Panc1 (cell line): ENCODE measurements at regions of chr5 and their contacts with region 1.

Region 1: DNA sequence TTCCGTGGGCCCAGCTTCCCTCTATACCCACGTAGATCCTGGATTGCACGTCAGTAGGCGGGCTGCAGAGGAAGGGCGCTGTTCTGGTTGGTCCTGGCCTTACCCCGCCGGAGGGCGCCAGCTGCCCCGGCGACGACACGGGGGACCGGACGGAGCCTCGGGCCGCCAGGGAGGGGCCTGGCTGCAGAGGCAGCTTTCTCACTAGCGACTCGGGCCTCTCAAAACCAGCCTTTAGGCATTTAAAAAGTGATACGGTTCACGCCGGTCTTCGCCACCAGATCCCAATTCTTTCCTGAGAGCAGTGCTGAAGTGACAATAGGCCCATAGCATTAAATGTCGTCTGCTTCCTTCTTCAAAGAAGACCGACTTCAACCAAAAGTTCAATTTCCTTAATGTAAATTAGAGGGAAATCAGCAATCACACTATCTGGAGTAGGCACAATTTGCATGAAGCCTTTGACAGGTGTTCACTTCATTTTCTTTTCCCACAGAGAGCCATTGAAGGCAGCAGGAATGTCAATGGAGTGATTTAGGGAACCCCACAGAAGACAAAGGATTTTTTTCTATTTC is 17.6 kb upstream of the UBE2D2 start:
- DNase-seq: no peak
- ATAC-seq: peak; percentile 90
- H3K4me3 ChIP-seq: peak overlapping the region in 1 of 2 experiments; percentile 26; a peak in 1 of 4 replicates
- H3K27ac ChIP-seq: no peak overlapping the region
- H3K4me1 ChIP-seq: no peaks in the 10 kb centered on the region
- H3K27me3 ChIP-seq: no peaks in the 10 kb centered on the region
- CTCF ChIP-seq: no peak

Region 2: GRCh38 chr5:139619861-139620260 is 76.4 kb after region 1 on chr5:
- CTCF ChIA-PET with region 1: no interaction called
- POLR2A ChIA-PET with region 1: interaction called, 17 read pairs
- in situ Hi-C with region 1: no loop called
- intact Hi-C with region 1: no loop called
- DNase-seq: no peak
- ATAC-seq: no peak
- H3K4me3 ChIP-seq: no peak overlapping the region
- H3K27ac ChIP-seq: no peak overlapping the region
- H3K4me1 ChIP-seq: no peaks in the 10 kb centered on the region
- H3K27me3 ChIP-seq: no peaks in the 10 kb centered on the region
- CTCF ChIP-seq: no peak